Activated CD4-positive, alpha-beta memory T cell treated with anti-CD3 and anti-CD28 coated beads for 36 hours (primary cell): ENCODE measurements at regions of chr4 and their contacts with region 1.

Region 1: GRCh38 chr4:145829629-145830395 is 108.8 kb downstream of the ZNF827 start:
- DNase-seq: peak; percentile 73
- H3K4me3 Mint-ChIP-seq: peak overlapping the region; percentile 46
- H3K27ac Mint-ChIP-seq: peak overlapping the region; percentile 71
- H3K4me1 Mint-ChIP-seq: peaks cover 46% of the 10 kb centered on the region
- H3K27me3 Mint-ChIP-seq: no peaks in the 10 kb centered on the region

Region 2: DNA sequence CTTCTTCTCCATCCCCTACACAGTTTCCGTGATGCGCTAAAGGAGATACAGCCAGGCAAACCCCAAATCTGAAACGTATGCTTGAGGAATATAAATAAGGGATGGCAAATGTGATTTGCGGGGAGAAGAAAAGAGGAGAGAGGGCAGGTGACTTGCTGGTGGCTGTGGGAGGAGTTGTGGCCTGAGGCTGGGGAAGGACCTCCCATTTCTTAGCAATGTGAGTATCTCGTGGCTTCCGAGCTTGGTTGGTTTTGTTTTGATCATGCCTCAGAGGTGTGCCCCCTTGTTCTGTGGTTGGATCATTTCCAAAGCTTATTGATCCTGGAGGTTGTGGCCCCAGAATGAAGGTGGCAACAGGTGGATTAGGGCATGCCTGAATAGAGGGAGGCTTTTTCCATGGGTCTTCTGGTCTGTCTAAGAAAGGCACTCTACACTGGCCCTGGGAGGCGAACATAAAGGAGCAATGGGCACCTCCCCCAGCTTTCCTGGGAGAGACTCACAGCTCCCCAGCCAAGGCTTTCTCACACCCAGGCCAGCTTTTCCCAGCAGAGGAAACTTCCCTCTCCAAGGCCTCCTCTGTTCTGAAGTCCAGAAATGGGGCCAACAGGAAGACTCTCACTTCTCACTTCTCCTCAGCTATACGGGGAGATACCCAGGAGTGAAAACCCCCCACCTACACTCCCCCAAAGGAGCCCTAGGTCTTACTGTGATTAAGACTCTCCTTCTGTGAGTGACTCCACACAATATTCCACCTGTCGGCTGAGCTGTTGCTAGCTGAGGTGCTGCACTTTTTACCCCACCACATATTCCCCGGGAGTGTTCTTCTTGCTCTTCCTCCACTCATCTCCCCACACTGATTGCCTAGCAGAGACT is 109.8 kb before region 1 on chr4:
- CTCF ChIA-PET with region 1: no interaction called
- POLR2A ChIA-PET with region 1: no interaction called
- intact Hi-C with region 1: loop called (anchors 1 kb)
- DNase-seq: peak; percentile 76
- H3K4me3 Mint-ChIP-seq: no peak overlapping the region
- H3K27ac Mint-ChIP-seq: peak overlapping the region; percentile 76
- H3K4me1 Mint-ChIP-seq: peaks cover 21% of the 10 kb centered on the region
- H3K27me3 Mint-ChIP-seq: peaks cover 15% of the 10 kb centered on the region

Region 3: GRCh38 chr4:145755802-145756201 is 74.0 kb before region 1 on chr4:
- CTCF ChIA-PET with region 1: no interaction called
- POLR2A ChIA-PET with region 1: no interaction called
- intact Hi-C with region 1: loop called (anchors 1 kb)
- DNase-seq: no peak
- H3K4me3 Mint-ChIP-seq: no peak overlapping the region
- H3K27ac Mint-ChIP-seq: peak overlapping the region; percentile 60
- H3K4me1 Mint-ChIP-seq: peaks cover 27% of the 10 kb centered on the region
- H3K27me3 Mint-ChIP-seq: peaks cover 6% of the 10 kb centered on the region

Region 4: DNA sequence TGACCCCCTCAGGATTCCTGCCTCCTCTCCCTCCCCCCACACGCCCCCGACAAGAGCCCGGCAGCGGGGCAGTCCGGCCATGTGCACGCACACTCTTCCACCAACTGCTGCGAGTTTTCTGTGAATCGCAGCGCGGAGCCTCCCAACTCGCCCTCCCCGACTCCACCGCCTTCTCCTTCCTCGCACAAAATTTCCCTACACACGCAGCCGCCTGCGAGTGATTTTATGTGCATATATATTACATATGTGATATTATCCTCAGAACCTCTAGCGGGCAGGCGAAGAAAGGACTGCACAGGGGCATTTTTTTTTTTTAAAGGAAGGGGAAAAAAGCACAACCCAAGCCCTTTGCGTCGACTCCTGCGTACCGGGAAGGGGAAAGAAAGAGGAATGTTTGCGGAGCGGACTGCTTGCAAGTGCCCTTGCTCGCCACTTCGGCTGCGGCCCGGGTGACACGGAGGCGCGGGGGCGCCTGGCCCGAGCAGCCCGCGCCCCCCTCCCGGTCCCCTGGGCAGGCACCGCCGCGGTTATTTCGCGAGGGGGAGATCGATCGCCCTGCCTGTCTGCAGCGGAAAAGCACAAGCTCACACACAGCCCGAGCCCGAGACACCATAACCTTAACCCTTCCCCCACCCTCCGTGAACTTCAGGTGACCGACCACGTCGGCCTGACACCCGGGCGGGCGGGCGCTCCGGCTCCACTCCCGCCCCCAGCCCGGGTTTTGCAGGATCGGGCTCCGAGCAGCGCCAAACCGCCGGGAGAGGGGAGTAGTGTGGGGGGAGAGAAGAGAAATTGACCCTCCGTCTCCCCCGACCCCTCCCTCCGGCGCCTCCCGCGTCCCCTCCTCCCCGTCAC is 106.6 kb after region 1 on chr4:
- CTCF ChIA-PET with region 1: no interaction called
- POLR2A ChIA-PET with region 1: no interaction called
- intact Hi-C with region 1: loop called (anchors 1 kb)
- DNase-seq: peak; percentile 72
- H3K4me3 Mint-ChIP-seq: peak overlapping the region; percentile 90
- H3K27ac Mint-ChIP-seq: peak overlapping the region; percentile 97
- H3K4me1 Mint-ChIP-seq: peaks cover 43% of the 10 kb centered on the region
- H3K27me3 Mint-ChIP-seq: peaks cover 1% of the 10 kb centered on the region